Natural killer cell (primary cell): ENCODE measurements at regions of chr13 and their contacts with region 1.

Region 1: GRCh38 chr13:114107686-114108081 is 24.7 kb downstream of the RASA3 start:
- DNase-seq: no peak
- ATAC-seq: no peak
- H3K4me3 ChIP-seq: no peak overlapping the region
- H3K4me3 Mint-ChIP-seq: peak overlapping the region; percentile 86
- H3K27ac ChIP-seq: peak overlapping the region; percentile 78
- H3K27ac Mint-ChIP-seq: peak overlapping the region; percentile 95 to 100
- H3K4me1 ChIP-seq: peaks cover 93% of the 10 kb centered on the region
- H3K4me1 Mint-ChIP-seq: peaks cover 66 to 85% of the 10 kb centered on the region in 2 donors
- H3K27me3 ChIP-seq: no peaks in the 10 kb centered on the region
- H3K27me3 Mint-ChIP-seq: no peaks in the 10 kb centered on the region
- CTCF ChIP-seq: no peak

Region 2: DNA sequence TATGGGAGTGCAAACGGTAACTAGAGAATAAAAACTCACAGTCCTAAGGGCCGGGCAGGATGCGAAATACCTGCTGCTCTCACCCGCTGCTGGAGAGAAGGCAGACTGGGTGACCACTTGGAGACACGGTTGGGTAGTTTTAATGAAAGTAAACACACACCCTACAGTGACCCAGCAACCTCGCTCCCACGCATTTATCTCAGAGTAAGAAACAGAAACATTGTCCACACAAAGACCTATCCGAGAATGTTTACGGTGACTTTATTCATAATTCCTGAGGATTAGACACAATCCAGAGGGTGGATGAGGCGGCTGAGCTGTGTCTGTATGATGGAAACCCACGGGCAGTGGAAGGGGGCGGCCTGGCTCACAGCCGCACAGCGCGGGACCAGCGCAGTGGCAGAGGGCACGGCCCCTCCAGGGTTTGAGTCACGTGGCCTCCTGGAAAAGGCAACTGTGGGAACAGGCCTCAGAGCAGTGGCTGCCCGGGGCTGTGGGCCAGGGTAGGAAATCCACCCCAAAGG is 60.3 kb before region 1 on chr13:
- intact Hi-C with region 1: no loop called
- DNase-seq: no peak
- ATAC-seq: no peak
- H3K4me3 ChIP-seq: no peak overlapping the region
- H3K4me3 Mint-ChIP-seq: peak overlapping the region; percentile 73
- H3K27ac ChIP-seq: no peak overlapping the region
- H3K27ac Mint-ChIP-seq: peak overlapping the region; percentile 91 to 92
- H3K4me1 ChIP-seq: peaks cover 81% of the 10 kb centered on the region
- H3K4me1 Mint-ChIP-seq: peaks cover 74 to 80% of the 10 kb centered on the region in 2 donors
- H3K27me3 ChIP-seq: no peaks in the 10 kb centered on the region
- H3K27me3 Mint-ChIP-seq: no peaks in the 10 kb centered on the region
- CTCF ChIP-seq: no peak

Region 3: DNA sequence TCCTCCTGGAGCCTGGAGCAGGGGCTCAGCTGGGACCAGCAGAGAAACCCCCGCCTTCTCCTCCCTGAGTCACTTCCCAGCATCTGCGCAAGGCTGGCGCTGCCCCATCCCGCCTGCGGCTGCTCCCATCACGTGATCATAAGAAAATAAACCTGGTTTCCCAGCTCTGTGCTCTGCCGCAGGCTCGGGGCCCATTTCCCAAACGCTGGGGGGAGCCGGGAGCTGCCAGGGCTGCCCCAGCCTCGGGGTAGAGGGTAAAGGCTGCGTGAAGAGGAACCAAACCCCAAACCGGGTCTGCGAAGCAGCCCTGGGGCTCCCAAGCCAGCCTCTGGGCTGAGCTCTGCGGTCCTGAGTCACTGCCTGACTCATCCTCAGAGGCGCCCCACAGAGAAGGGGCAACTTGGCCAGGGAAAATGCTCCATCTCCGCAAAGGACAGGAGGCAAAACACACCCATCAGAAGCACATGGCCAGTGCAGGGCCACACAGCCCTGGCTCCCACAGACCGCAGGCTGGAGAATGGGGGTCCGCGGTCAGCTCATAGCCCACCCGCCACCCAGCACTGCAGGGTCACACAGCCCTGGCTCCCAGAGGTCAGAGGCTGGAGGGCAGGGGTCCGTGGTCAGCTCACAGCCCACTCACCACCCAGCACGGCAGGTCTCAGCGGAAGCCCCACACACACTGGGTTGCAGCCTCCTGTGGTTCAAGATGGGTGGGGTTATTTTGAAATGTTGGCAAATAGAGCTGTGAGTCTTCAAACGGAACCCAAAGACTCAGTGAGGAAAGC is 42.4 kb before region 1 on chr13:
- intact Hi-C with region 1: loop called (anchors 2 kb)
- DNase-seq: peak; percentile 65 to 81
- ATAC-seq: peak; percentile 64 to 84 (median 76)
- H3K4me3 ChIP-seq: peak overlapping the region; percentile 41
- H3K4me3 Mint-ChIP-seq: peak overlapping the region; percentile 91
- H3K27ac ChIP-seq: peak overlapping the region; percentile 82
- H3K27ac Mint-ChIP-seq: peak overlapping the region; percentile 87 to 95
- H3K4me1 ChIP-seq: peaks cover 78% of the 10 kb centered on the region
- H3K4me1 Mint-ChIP-seq: peaks cover 62 to 78% of the 10 kb centered on the region in 2 donors
- H3K27me3 ChIP-seq: no peaks in the 10 kb centered on the region
- H3K27me3 Mint-ChIP-seq: no peaks in the 10 kb centered on the region
- CTCF ChIP-seq: no peak

Region 4: DNA sequence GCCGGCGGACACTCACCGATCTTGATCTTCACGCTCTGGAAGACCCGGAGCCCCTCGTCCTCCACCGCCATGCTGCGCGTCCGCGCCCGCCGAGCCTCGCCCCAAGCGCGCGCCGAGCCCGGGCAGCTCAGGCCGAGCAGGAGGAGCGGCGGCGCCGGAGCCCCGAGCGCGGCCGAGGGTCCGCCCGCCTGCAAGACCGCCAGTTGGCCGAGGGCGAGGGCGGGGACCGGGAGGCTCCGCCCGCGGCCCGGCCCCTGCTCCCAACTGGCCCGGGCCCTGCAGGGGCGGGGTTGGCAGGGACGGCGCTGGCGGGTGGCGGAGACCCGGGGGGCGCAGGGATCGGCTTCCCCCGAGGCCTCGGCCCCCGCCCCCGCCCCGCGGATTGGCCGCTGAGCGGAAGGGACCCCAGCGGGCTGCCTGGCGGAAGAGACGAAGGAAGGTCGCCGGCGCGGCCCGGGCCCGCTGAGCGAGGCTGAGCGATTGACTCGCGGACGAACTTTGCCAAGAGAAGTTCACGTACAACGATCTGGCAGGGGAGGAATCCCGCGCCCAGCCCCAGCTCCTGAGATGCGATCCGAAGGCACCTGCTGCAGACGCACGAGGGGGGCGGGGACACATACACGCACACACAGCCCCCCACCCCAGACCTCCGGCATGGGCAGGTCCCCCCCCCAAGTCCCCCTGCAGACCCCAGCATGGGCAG is 24.9 kb after region 1 on chr13 and contains the start of gene RASA3:
- intact Hi-C with region 1: loop called (anchors 2 kb)
- DNase-seq: peak; percentile 63 to 80
- ATAC-seq: peak; percentile 51 to 72 (median 64)
- H3K4me3 ChIP-seq: peak within 1 kb of the TSS; percentile 97
- H3K4me3 Mint-ChIP-seq: peak within 1 kb of the TSS; percentile 98
- H3K27ac ChIP-seq: peak within 1 kb of the TSS; percentile 84
- H3K27ac Mint-ChIP-seq: peak within 1 kb of the TSS; percentile 91 to 92
- H3K4me1 ChIP-seq: peaks cover 48% of the 10 kb centered on the region
- H3K4me1 Mint-ChIP-seq: peaks cover 53 to 66% of the 10 kb centered on the region in 2 donors
- H3K27me3 ChIP-seq: no peaks in the 10 kb centered on the region
- H3K27me3 Mint-ChIP-seq: no peaks in the 10 kb centered on the region
- CTCF ChIP-seq: no peak
- total RNA-seq, gene RASA3: 252 to 277 (median 274) TPM